B cell (primary cell): ENCODE measurements at regions of chr2 and their contacts with region 1.

Region 1: GRCh38 chr2:134245340-134245984 is 8.4 kb upstream of the MGAT5 start:
- DNase-seq: peak; percentile 84
- ATAC-seq: peak; percentile 55
- H3K4me3 ChIP-seq: peak overlapping the region in 2 of 5 experiments; percentile 6 to 12
- H3K4me3 Mint-ChIP-seq: peak overlapping the region; percentile 76
- H3K27ac ChIP-seq: peak overlapping the region; percentile 50 to 83
- H3K27ac Mint-ChIP-seq: peak overlapping the region; percentile 85
- H3K4me1 ChIP-seq: peaks cover 87 to 92% of the 10 kb centered on the region in 2 donors
- H3K4me1 Mint-ChIP-seq: peaks cover 92% of the 10 kb centered on the region
- H3K27me3 ChIP-seq: no peaks in the 10 kb centered on the region
- H3K27me3 Mint-ChIP-seq: no peaks in the 10 kb centered on the region
- CTCF ChIP-seq: peak; percentile 80

Region 2: GRCh38 chr2:134154246-134154645 is 91.2 kb before region 1 on chr2:
- CTCF ChIA-PET with region 1: interaction called, 17 read pairs
- POLR2A ChIA-PET with region 1: no interaction called
- intact Hi-C with region 1: no loop called
- DNase-seq: peak; percentile 77
- ATAC-seq: peak; percentile 68
- H3K4me3 ChIP-seq: no peak overlapping the region
- H3K4me3 Mint-ChIP-seq: peak overlapping the region; percentile 57
- H3K27ac ChIP-seq: peak overlapping the region in 1 of 2 donors; percentile 84
- H3K27ac Mint-ChIP-seq: peak overlapping the region; percentile 85
- H3K4me1 ChIP-seq: peaks cover 43 to 60% of the 10 kb centered on the region in 2 donors
- H3K4me1 Mint-ChIP-seq: peaks cover 81% of the 10 kb centered on the region
- H3K27me3 ChIP-seq: no peaks in the 10 kb centered on the region
- H3K27me3 Mint-ChIP-seq: no peaks in the 10 kb centered on the region
- CTCF ChIP-seq: no peak

Region 3: DNA sequence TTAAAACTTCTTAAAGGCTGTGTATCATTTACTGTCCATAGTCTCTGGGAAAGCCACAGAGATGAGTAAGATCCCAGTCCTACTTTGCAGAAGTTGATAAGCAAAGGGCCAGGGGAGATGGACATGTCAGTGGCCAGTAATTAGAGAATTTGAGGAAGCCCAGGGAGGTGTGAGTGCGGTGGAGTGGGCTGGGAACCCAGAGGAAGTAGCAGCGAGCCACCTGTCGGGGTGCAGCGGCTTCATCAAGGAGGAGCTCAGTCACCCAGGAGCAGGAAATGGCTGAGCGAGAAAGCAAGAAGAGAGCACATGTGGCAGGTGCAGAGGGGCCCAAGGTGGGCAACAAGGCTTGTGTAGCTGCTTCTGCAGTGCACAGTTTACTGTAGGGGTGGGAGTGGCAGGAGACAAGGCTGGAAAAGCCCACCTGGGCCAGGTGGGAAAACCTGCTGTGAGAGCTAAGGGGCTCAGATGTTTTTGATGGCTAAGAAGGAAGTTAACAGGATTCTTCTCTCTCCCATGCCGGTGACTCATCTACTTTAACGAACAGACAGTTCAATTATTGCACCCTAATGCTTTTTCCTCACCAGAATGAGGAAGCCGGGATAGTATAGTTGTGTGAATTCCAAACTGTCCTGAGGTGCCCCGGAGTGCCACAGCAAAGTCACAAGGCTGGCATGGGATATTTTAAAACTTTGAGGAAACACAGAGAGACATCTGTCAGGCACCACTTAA is 26.4 kb before region 1 on chr2:
- CTCF ChIA-PET with region 1: interaction called, 45 read pairs
- POLR2A ChIA-PET with region 1: no interaction called
- intact Hi-C with region 1: loop called (anchors 5 kb)
- DNase-seq: peak; percentile 76
- ATAC-seq: peak; percentile 60
- H3K4me3 ChIP-seq: peak overlapping the region in 2 of 5 experiments; percentile 18 to 21
- H3K4me3 Mint-ChIP-seq: peak overlapping the region; percentile 67
- H3K27ac ChIP-seq: peak overlapping the region; percentile 74 to 84
- H3K27ac Mint-ChIP-seq: peak overlapping the region; percentile 91
- H3K4me1 ChIP-seq: peaks cover 52 to 55% of the 10 kb centered on the region in 2 donors
- H3K4me1 Mint-ChIP-seq: peaks cover 77% of the 10 kb centered on the region
- H3K27me3 ChIP-seq: no peaks in the 10 kb centered on the region
- H3K27me3 Mint-ChIP-seq: no peaks in the 10 kb centered on the region
- CTCF ChIP-seq: no peak

Region 4: DNA sequence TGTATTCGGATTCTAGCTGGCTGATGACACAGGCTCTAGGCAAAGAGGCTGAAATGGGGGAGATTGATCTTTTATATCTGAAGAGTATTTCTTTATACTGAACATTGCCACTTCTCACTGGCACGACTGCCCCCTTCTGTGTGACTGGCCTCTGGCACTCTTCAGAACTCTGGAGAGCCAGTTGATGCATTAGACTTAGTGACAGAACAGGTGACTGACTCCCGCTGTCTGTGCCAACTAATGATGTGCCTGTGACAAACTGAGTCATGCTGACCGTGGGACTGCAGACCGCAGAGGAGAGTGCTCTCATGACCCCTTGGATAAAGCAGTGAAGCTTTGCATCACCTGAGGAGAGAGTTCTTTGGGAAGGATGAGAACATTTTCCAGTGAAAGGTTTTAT is 22.8 kb after region 1 on chr2:
- CTCF ChIA-PET with region 1: interaction called, 65 read pairs
- POLR2A ChIA-PET with region 1: interaction called, 14 read pairs
- intact Hi-C with region 1: loop called (anchors 2 kb)
- DNase-seq: no peak
- ATAC-seq: no peak
- H3K4me3 ChIP-seq: no peak overlapping the region
- H3K4me3 Mint-ChIP-seq: peak overlapping the region; percentile 69
- H3K27ac ChIP-seq: peak overlapping the region; percentile 51 to 80
- H3K27ac Mint-ChIP-seq: peak overlapping the region; percentile 89
- H3K4me1 ChIP-seq: peaks cover 92 to 93% of the 10 kb centered on the region in 2 donors
- H3K4me1 Mint-ChIP-seq: peaks cover 86% of the 10 kb centered on the region
- H3K27me3 ChIP-seq: no peaks in the 10 kb centered on the region
- H3K27me3 Mint-ChIP-seq: no peaks in the 10 kb centered on the region
- CTCF ChIP-seq: no peak

Region 5: GRCh38 chr2:134324947-134325346 is 79.5 kb after region 1 on chr2:
- CTCF ChIA-PET with region 1: interaction called, 10 read pairs
- POLR2A ChIA-PET with region 1: no interaction called
- intact Hi-C with region 1: no loop called
- DNase-seq: peak; percentile 70
- ATAC-seq: peak; percentile 68
- H3K4me3 ChIP-seq: peak overlapping the region in 1 of 5 experiments; percentile 17
- H3K4me3 Mint-ChIP-seq: peak overlapping the region; percentile 66
- H3K27ac ChIP-seq: peak overlapping the region; percentile 42 to 61
- H3K27ac Mint-ChIP-seq: peak overlapping the region; percentile 90
- H3K4me1 ChIP-seq: peaks cover 58 to 83% of the 10 kb centered on the region in 2 donors
- H3K4me1 Mint-ChIP-seq: peaks cover 90% of the 10 kb centered on the region
- H3K27me3 ChIP-seq: no peaks in the 10 kb centered on the region
- H3K27me3 Mint-ChIP-seq: no peaks in the 10 kb centered on the region
- CTCF ChIP-seq: no peak

Region 6: DNA sequence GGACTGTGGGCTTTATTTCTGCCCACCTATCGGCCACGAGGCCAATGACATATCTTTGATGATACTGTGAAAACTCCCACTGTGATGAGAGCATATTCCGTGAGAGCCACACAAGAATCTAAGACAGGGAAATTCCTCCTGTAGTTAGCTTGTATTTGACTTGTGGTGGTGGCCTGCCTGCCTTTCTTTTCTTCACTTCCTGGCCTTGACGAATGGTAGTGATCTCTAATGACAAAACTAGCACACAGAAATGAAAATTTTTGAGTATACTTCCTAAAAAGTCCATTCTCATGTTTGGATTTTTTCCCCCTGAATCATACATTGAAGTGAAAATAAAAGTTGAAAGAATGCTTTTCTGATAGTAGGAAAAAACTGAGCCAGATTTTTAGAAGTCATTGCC is 102.8 kb after region 1 on chr2:
- CTCF ChIA-PET with region 1: interaction called, 23 read pairs
- POLR2A ChIA-PET with region 1: no interaction called
- intact Hi-C with region 1: no loop called
- DNase-seq: no peak
- ATAC-seq: no peak
- H3K4me3 ChIP-seq: no peak overlapping the region
- H3K4me3 Mint-ChIP-seq: no peak overlapping the region
- H3K27ac ChIP-seq: peak overlapping the region in 1 of 2 donors; percentile 15
- H3K27ac Mint-ChIP-seq: peak overlapping the region; percentile 66
- H3K4me1 ChIP-seq: peaks cover 6 to 8% of the 10 kb centered on the region in 2 donors
- H3K4me1 Mint-ChIP-seq: peaks cover 35% of the 10 kb centered on the region
- H3K27me3 ChIP-seq: no peaks in the 10 kb centered on the region
- H3K27me3 Mint-ChIP-seq: no peaks in the 10 kb centered on the region
- CTCF ChIP-seq: no peak

Region 7: GRCh38 chr2:134758633-134759032 is 513.2 kb after region 1 on chr2:
- CTCF ChIA-PET with region 1: no interaction called
- POLR2A ChIA-PET with region 1: no interaction called
- intact Hi-C with region 1: no loop called
- DNase-seq: peak; percentile 84
- ATAC-seq: peak; percentile 96
- H3K4me3 ChIP-seq: peak overlapping the region in 1 of 5 experiments; percentile 10
- H3K4me3 Mint-ChIP-seq: peak overlapping the region; percentile 59
- H3K27ac ChIP-seq: no peak overlapping the region
- H3K27ac Mint-ChIP-seq: peak overlapping the region; percentile 73
- H3K4me1 ChIP-seq: peaks cover 18 to 22% of the 10 kb centered on the region in 2 donors
- H3K4me1 Mint-ChIP-seq: peaks cover 26% of the 10 kb centered on the region
- H3K27me3 ChIP-seq: no peaks in the 10 kb centered on the region
- H3K27me3 Mint-ChIP-seq: peaks cover 3% of the 10 kb centered on the region
- CTCF ChIP-seq: no peak

Region 8: DNA sequence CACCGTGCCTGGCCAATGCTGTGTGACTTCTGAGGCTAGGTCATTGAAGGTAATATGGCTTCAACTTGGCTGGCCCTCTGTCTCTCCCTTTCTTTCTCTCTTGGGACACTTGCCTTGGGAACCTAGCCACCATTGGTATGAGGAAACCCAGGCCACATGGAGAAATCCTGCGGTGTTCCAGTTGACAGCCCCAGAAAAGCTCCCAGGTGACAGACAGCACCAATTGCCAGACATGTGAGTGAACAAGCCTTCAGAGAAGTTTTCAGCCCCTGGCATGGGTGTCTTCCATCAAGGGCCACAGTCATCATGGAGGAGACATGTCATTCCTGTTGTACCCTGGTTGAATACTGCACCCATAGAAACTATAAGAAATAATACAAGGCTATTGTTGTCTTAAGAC is 993.2 kb after region 1 on chr2:
- CTCF ChIA-PET with region 1: no interaction called
- POLR2A ChIA-PET with region 1: no interaction called
- intact Hi-C with region 1: no loop called
- DNase-seq: no peak
- ATAC-seq: no peak
- H3K4me3 ChIP-seq: no peak overlapping the region
- H3K4me3 Mint-ChIP-seq: no peak overlapping the region
- H3K27ac ChIP-seq: no peak overlapping the region
- H3K27ac Mint-ChIP-seq: no peak overlapping the region
- H3K4me1 ChIP-seq: no peaks in the 10 kb centered on the region
- H3K4me1 Mint-ChIP-seq: no peaks in the 10 kb centered on the region
- H3K27me3 ChIP-seq: no peaks in the 10 kb centered on the region
- H3K27me3 Mint-ChIP-seq: no peaks in the 10 kb centered on the region
- CTCF ChIP-seq: no peak

Region 9: DNA sequence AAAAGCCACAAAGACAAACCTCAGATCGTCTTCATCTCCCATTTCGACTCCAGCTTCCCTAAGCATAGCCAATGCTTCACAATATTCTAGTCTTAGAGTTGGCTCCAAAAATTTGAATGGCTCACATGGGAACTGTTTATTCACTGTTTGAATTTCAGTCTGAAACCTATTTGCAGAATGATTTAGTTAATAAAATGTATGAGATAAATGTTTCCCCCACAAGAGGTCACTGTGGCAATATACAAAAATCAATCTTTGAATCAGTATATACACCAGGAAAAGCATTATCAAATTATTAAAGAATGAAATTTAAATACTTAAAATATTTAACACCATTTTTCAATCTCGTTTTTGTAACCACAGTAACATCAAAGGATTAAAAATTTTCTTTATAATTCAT is 1670.7 kb after region 1 on chr2:
- CTCF ChIA-PET with region 1: no interaction called
- POLR2A ChIA-PET with region 1: no interaction called
- intact Hi-C with region 1: no loop called
- DNase-seq: peak; percentile 76
- ATAC-seq: peak; percentile 47
- H3K4me3 ChIP-seq: no peak overlapping the region
- H3K4me3 Mint-ChIP-seq: no peak overlapping the region
- H3K27ac ChIP-seq: no peak overlapping the region
- H3K27ac Mint-ChIP-seq: no peak overlapping the region
- H3K4me1 ChIP-seq: no peaks in the 10 kb centered on the region
- H3K4me1 Mint-ChIP-seq: peaks cover 10% of the 10 kb centered on the region
- H3K27me3 ChIP-seq: no peaks in the 10 kb centered on the region
- H3K27me3 Mint-ChIP-seq: no peaks in the 10 kb centered on the region
- CTCF ChIP-seq: peak; percentile 80